Thyroid gland (tissue), 4 donors: ENCODE measurements at regions of chr19 and their contacts with region 1.

Region 1: DNA sequence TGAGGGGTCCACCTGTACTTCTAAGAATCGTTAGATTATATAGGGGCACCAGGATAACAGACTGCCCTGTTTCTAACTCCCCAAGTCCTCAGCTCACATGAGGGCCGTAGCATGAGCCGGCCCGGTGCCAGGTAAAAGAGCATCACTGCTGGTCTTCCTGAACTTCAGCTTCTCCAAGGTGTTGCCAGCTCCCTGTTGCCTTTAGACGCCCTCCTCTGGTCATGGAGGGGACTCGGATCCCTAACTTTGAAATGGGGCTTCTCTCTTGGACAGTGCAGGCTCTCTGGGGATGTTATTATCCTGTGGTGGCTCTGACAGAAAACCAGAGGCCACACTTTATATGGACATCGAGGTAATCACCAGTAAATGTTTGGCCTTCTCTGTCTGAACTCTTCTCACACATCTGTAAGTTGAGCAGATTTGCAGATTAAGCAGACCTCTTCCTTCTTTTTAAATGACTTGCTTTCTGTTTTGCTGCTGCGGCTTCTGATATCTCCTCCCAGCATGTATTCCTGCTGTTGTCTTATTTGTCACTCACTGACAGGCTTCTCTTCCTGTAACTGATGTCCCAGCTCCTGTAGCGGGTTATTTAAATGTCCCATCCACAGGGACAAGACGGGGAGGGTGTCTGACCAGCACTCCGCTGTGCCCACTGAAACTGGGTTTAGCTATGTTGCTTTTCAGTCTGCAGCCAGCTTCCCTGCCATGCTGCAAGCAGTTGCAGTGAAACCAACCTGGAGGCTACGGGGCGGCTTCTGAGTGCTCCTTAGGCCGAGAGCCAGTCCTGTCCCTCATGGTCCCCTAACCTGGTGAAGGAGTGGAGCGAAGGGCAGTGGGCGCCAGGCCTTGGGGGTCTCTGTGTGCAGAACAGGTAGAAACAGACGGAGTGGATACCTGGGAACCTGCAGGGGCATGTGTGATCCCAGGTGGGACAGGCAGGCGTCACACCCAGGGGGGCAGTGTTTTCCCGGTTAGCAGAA is 39.2 kb downstream of the TSSK6 start:
- DNase-seq: peak in 1 of 2 donors; percentile 28
- H3K4me3 ChIP-seq: no peak overlapping the region
- H3K27ac ChIP-seq: no peak overlapping the region
- H3K4me1 ChIP-seq: peaks cover 11 to 15% of the 10 kb centered on the region in 2 donors
- H3K27me3 ChIP-seq: no peaks in the 10 kb centered on the region
- CTCF ChIP-seq: peak in 1 of 6 experiments; percentile 21
- POLR2A ChIP-seq: no peak

Region 2: DNA sequence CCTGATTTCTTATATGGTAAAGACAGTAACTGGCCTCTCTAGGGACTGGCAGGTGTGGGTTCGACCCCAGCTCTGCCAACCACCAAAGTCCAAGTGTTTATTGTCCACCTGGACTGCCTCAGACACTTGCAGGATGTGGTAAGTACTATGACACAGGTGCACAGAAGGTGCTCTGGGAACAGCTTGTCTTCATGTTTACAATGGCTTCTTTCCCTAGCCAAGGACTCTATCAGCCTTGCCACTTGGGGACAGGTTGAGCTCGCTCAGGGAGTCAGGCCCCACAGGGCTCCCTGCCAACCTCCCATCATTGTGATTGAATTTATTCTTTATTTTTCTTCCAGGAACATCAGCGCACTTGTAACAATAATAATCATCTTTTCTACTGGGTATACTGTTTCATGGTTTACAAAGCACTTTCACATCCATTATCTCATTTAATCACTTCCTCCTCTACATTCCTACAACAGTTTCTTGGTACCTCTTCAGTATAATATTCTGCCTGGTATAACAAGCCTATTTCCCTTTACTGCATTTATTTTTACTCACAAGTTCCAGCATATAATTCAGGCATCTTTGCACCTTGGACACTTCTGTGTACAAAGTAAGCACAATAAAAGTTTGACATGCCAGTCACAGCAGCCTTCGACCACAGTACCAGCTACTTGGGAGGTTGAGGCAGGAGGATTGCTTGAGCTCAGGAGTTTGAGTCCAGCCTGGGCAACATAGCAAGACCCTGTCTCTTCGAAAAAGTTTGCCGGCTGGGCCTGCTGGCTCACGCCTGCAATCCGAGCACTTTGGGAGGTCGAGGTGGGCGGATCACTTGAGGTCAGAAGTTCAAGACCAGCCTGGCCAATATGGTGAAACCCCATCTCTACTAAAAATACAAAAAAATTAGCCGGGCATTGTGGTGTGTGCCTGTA is 94.9 kb before region 1 on chr19:
- intact Hi-C with region 1: loop called (anchors 5 kb)
- DNase-seq: no peak
- H3K4me3 ChIP-seq: no peak overlapping the region
- H3K27ac ChIP-seq: no peak overlapping the region
- H3K4me1 ChIP-seq: peaks cover 20 to 27% of the 10 kb centered on the region in 2 donors
- H3K27me3 ChIP-seq: no peaks in the 10 kb centered on the region
- CTCF ChIP-seq: no peak
- POLR2A ChIP-seq: no peak

Region 3: GRCh38 chr19:19459707-19460251 is 16.4 kb before region 1 on chr19:
- intact Hi-C with region 1: no loop called
- DNase-seq: peak in 1 of 2 donors; percentile 28
- H3K4me3 ChIP-seq: no peak overlapping the region
- H3K27ac ChIP-seq: peak overlapping the region; percentile 11 to 93 (median 85)
- H3K4me1 ChIP-seq: peaks cover 50 to 72% of the 10 kb centered on the region in 2 donors
- H3K27me3 ChIP-seq: no peaks in the 10 kb centered on the region
- CTCF ChIP-seq: no peak
- POLR2A ChIP-seq: no peak

Region 4: GRCh38 chr19:20151617-20152145 is 675.5 kb after region 1 on chr19:
- intact Hi-C with region 1: no loop called
- DNase-seq: peak; percentile 32
- H3K4me3 ChIP-seq: no peak overlapping the region
- H3K27ac ChIP-seq: peak overlapping the region; percentile 73 to 89 (median 85)
- H3K4me1 ChIP-seq: peaks cover 25 to 26% of the 10 kb centered on the region in 2 donors
- H3K27me3 ChIP-seq: no peaks in the 10 kb centered on the region
- CTCF ChIP-seq: no peak
- POLR2A ChIP-seq: no peak